ENCODE measurements at regions of chr5 and their contacts with region 1.

Region 1: GRCh38 chr5:32126691-32127090 is 47.4 kb downstream of the GOLPH3 start:
- DNase-seq: no peak
- ATAC-seq: no peak

Region 2: GRCh38 chr5:32174011-32174870 is 47.5 kb after region 1 on chr5 and contains the start of gene GOLPH3:
- intact Hi-C with region 1: loop called (anchors 5 kb)
- DNase-seq: peak; percentile 99
- ATAC-seq: peak; percentile 95
- total RNA-seq, gene GOLPH3: 42.3 TPM

Measured in Right ventricle myocardium inferior (tissue), 1 donor.